BJ (cell line): ENCODE measurements at regions of chr12 and their contacts with region 1.

Region 1: GRCh38 chr12:52879394-52880351 is 25.2 kb downstream of the KRT8 start:
- DNase-seq: no peak
- H3K4me3 ChIP-seq: no peak overlapping the region
- H3K27me3 ChIP-seq: no peaks in the 10 kb centered on the region
- CTCF ChIP-seq: peak; percentile 93

Region 2: DNA sequence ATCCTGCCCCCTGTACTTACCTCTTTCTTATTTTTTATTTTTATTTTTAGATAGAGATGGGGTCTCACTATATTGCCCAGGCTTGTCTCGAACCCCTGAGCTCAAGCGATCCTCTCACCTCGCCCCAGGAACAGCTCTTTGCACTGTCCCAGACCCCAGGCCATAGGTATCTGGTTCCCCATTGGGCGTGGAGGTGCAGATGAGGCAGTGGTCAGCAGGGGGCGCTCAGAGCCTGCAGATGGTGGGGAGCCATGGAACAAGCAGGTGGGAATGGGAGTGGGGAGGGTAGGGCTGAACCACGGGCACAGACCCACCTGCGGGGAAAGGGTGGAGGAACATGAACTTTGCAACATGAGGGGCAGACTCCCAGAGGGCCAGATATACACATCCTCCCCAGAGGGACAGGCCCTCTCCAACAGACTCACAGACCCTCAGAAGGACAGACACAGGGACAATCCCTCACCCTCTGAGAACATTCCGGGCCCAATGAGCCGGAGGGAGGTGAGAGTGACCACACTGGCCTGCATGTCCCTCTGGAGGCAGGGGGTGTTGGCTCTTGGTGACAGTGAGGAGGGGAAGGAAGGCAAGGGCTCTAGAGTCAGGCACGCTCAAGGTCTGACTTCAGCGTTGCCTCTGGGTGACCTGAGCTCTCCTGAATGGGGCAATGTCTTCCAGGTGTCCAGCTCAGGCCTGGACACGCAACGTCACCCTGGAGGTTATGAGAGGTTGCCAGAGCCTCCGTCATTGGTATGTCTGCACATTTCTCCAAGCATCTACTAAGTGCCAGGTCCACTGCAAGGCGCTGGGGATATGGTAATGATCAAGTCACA is 722.7 kb before region 1 on chr12:
- CTCF ChIA-PET with region 1: interaction called, 27 read pairs
- POLR2A ChIA-PET with region 1: no interaction called
- DNase-seq: no peak
- H3K4me3 ChIP-seq: no peak overlapping the region
- H3K27me3 ChIP-seq: no peaks in the 10 kb centered on the region
- CTCF ChIP-seq: peak; percentile 96

Region 3: DNA sequence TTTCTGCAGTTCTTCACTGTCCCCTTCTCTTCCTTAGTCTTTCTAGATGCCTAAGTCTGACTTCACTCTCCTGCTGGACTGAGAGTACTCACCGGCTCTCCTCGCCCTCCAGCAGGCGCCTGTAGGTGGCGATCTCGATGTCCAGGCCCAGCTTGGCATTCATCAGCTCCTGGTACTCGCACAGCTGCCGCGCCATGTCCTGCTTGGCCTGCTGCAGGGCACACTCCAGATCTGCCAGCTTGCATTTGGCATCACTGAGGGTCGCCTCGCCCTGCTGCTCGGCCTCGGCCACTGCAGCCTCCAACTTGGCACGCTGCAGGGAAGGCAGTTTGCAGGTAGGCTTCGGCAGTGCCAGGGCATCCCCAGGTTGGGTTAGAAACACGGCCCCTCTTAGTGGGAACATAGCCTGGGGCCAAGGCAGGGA is 499.4 kb before region 1 on chr12:
- CTCF ChIA-PET with region 1: interaction called, 14 read pairs
- POLR2A ChIA-PET with region 1: no interaction called
- DNase-seq: no peak
- H3K4me3 ChIP-seq: no peak overlapping the region
- H3K27me3 ChIP-seq: peaks cover 9% of the 10 kb centered on the region
- CTCF ChIP-seq: peak; percentile 64

Region 4: GRCh38 chr12:52582971-52583456 is 296.7 kb before region 1 on chr12:
- CTCF ChIA-PET with region 1: interaction called, 283 read pairs
- POLR2A ChIA-PET with region 1: no interaction called
- DNase-seq: no peak
- H3K4me3 ChIP-seq: no peak overlapping the region
- H3K27me3 ChIP-seq: peaks cover 16% of the 10 kb centered on the region
- CTCF ChIP-seq: peak; percentile 76

Region 5: GRCh38 chr12:52799062-52799761 is 80.5 kb before region 1 on chr12:
- CTCF ChIA-PET with region 1: no interaction called
- POLR2A ChIA-PET with region 1: no interaction called
- DNase-seq: no peak
- H3K4me3 ChIP-seq: no peak overlapping the region
- H3K27me3 ChIP-seq: peaks cover 1% of the 10 kb centered on the region
- CTCF ChIP-seq: no peak

Region 6: DNA sequence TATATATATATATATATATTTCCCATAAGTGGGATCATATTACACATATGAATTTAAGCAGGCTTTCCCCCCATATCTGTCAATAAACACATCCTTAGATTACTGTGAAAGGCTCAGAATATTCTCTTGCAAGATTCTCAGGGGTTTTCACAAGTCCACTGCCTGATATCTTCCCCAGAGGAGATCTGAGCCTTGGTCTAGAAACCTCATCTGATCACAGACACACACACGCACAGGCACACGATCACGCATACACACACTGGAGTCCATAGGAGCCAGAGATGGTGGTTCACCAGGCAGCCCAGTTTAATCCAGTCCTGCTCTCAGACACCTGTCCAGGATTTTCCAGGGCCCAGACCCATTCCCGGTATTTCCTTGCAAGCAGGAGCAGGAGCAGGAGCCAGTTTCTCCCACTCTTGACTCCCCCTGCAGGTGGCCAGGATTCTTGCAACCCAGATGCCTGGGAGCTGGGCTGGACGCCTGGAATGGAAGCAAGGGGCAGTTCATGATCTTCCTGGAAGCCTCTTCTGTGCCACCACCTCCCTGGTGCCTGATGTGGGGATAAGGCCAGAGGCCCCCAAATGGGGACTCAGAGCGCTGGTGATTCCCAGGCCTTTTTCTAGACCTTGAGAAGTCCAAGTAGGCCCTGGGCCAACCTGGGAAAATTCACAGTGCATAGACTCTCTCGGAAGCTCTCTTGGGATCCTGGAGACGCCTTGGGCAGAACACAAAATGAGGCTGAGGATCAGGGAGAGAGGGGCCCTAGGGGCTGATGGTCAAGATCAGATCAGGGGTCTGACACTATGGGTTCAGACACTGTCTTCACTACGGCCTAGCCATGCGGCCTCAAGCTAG is 14.4 kb before region 1 on chr12:
- CTCF ChIA-PET with region 1: interaction called, 24 read pairs
- POLR2A ChIA-PET with region 1: no interaction called
- DNase-seq: no peak
- H3K4me3 ChIP-seq: no peak overlapping the region
- H3K27me3 ChIP-seq: no peaks in the 10 kb centered on the region
- CTCF ChIP-seq: peak; percentile 96

Region 7: GRCh38 chr12:52980693-52981423 is 101.2 kb after region 1 on chr12:
- CTCF ChIA-PET with region 1: interaction called, 722 read pairs
- POLR2A ChIA-PET with region 1: no interaction called
- DNase-seq: peak; percentile 51
- H3K4me3 ChIP-seq: no peak overlapping the region
- H3K27me3 ChIP-seq: no peaks in the 10 kb centered on the region
- CTCF ChIP-seq: peak; percentile 95